Posterior cingulate gyrus (tissue), 11 donors: ENCODE measurements at regions of chr15 and their contacts with region 1.

Region 1: GRCh38 chr15:51380999-51381795 is 39.7 kb downstream of the GLDN start:
- DNase-seq: peak in 8 of 10 donors; percentile 33 to 93 (median 62)

Region 2: GRCh38 chr15:51162865-51163762 is 218.1 kb before region 1 on chr15:
- intact Hi-C with region 1: loop called (anchors 5 kb)
- DNase-seq: peak; percentile 52 to 96 (median 82)

Region 3: GRCh38 chr15:51229907-51230330 is 151.3 kb before region 1 on chr15:
- intact Hi-C with region 1: loop called (anchors 1 kb)
- DNase-seq: no peak

Region 4: GRCh38 chr15:51281368-51281967 is 99.7 kb before region 1 on chr15:
- intact Hi-C with region 1: loop called (anchors 1 kb)
- DNase-seq: peak; percentile 45 to 97 (median 82)

Region 5: GRCh38 chr15:51348688-51349087 is 32.5 kb before region 1 on chr15:
- intact Hi-C with region 1: loop called (anchors 5 kb)
- DNase-seq: no peak